GM12878 (cell line): ENCODE measurements at regions of chr6 and their contacts with region 1.

Region 1: DNA sequence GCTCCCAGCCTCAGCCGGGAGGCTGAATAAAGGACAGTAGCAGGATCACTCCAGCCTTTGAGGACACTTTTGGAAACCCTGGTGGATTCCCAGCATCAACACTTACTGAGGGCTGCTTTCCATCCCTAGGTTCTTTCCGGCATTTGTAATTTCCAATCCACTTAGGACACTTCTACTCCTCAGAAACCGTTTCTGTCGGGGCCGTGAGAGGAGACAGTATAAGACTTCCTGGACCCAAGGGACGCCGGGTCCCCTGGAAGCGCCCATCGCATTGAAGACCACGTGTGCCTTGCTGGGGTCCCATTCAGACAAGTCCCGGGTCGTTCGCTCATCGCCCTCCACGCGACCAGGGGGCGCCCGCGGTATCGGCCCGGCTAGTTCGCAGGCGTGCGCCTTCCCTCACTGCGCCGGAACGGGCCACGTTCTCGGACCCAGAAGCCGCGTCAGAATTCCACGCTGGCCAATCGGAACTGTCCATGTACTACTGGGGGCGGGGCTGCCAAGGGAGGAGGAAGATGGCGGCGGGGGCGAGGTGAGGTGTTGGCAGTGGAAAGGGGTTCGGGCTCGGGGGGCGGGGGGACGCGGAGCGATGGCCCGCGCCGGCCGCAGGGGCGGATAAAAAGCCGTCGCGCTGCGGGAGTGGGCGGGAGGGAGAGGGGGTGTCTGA is at the start of gene NUS1:
- DNase-seq: peak; percentile 88
- ATAC-seq: peak; percentile 94
- H3K4me3 ChIP-seq: peak within 1 kb of the TSS; percentile 86
- H3K27ac ChIP-seq: peak within 1 kb of the TSS; percentile 82
- H3K4me1 ChIP-seq: no peaks in the 10 kb centered on the region
- H3K27me3 ChIP-seq: no peaks in the 10 kb centered on the region
- CTCF ChIP-seq: peak; percentile 81 to 93 (median 81); a peak in 5 of 6 replicates
- EP300 ChIP-seq: no peak
- POLR2A ChIP-seq: peak; percentile 56
- RAD21 ChIP-seq: no peak
- polyA plus RNA-seq, gene NUS1: 16.7 to 22.0 TPM

Region 2: DNA sequence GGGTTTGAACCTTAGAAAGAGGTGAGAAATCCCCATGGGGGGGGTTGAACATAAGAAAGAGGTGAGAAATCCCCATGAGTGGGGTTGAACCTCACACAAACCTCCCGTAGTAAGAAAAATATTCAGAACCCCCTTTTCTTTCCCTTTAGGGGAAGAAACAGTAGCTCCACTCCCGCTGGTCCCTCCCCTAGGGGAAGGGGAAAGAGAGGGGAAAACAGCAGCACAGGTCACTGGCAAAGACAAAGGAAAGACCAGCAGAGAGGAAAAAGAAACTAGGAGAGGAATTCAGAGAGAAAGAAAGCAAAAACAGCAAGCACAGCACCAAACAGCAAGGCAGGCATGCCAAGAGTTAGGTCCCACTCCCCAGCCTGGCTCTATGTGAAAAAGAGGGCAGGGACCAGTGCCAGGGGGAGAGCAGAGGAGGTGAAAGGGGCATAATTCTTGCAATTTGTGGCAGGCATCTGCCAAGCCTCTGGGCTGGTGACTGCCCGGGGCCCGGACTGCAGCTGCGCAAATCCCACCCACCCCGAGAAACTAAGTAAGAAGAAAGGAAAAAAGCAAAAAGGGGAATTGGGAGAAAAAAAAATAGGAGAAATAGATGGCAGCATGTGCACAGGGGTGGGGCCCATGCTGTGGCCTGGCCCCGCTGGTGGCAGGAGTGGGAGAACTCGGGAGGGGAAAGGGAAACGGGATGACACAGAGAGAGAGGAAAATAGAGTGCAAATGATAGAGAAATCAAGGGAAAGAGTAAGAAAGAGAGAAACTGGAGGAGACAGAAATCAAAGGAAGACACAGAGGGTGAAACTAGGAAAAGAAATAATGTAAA is 57.7 kb before region 1 on chr6:
- CTCF ChIA-PET with region 1: no interaction called
- POLR2A ChIA-PET with region 1: no interaction called
- RAD21 ChIA-PET with region 1: no interaction called
- SMC1A ChIA-PET with region 1: no interaction called
- in situ Hi-C with region 1: no loop called
- intact Hi-C with region 1: loop called (anchors 1 kb)
- DNase-seq: no peak
- ATAC-seq: peak; percentile 47
- H3K4me3 ChIP-seq: no peak overlapping the region
- H3K27ac ChIP-seq: peak overlapping the region; percentile 66
- H3K4me1 ChIP-seq: 0 out of 2 replicates have a peak, but pooled peaks cover 3% of the 10 kb centered on the region
- H3K27me3 ChIP-seq: no peaks in the 10 kb centered on the region
- CTCF ChIP-seq: no peak
- EP300 ChIP-seq: no peak
- POLR2A ChIP-seq: no peak
- RAD21 ChIP-seq: no peak

Region 3: GRCh38 chr6:117771403-117771802 is 96.3 kb after region 1 on chr6:
- CTCF ChIA-PET with region 1: no interaction called
- POLR2A ChIA-PET with region 1: no interaction called
- RAD21 ChIA-PET with region 1: interaction called, 3 read pairs
- SMC1A ChIA-PET with region 1: no interaction called
- in situ Hi-C with region 1: no loop called
- intact Hi-C with region 1: loop called (anchors 5 kb)
- DNase-seq: peak; percentile 90
- ATAC-seq: peak; percentile 98
- H3K4me3 ChIP-seq: no peak overlapping the region
- H3K27ac ChIP-seq: peak overlapping the region; percentile 55; the same call in 1 of the 2 replicates
- H3K4me1 ChIP-seq: peaks cover 30% of the 10 kb centered on the region
- H3K27me3 ChIP-seq: no peaks in the 10 kb centered on the region
- CTCF ChIP-seq: no peak
- EP300 ChIP-seq: peak; percentile 64 to 83; a peak in 2 of 4 replicates
- POLR2A ChIP-seq: no peak
- RAD21 ChIP-seq: no peak

Region 4: DNA sequence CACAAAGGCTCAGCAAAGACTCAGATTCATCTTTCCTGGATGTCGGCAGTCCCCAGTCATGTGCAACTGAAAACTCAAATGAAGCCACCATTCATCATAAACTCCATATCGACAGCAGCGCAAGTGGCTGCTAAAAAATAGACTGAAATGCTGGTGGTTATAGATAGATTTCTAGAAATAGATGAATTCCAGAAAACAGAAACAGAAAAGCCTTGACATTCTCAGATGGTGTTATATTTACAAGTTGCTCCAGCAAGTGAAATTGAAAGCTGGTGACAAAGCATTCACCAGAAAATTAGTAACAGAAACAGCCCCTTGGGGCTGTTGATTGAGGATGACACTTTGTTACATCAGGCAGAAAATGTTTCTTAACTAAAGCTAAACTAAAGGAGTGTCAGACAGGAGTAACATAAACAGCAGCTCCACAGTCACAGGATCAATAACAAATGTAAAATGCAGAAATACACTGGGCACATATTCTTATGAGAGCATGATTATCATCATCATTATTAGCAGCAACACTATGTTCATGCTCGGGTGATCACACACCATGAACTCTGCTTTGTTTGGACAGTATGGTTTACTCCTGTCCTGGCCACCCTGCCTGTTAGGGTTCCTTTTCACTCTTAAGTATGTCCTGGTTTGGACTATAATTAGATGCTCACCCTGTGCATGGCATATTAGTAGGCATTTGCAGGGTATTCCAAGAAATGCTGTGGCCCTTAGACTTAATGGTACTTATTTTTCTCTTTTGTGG is 195.5 kb after region 1 on chr6:
- CTCF ChIA-PET with region 1: no interaction called
- POLR2A ChIA-PET with region 1: no interaction called
- RAD21 ChIA-PET with region 1: no interaction called
- SMC1A ChIA-PET with region 1: no interaction called
- in situ Hi-C with region 1: no loop called
- intact Hi-C with region 1: no loop called
- DNase-seq: no peak
- ATAC-seq: peak; percentile 57
- H3K4me3 ChIP-seq: no peak overlapping the region
- H3K27ac ChIP-seq: no peak overlapping the region
- H3K4me1 ChIP-seq: no peaks in the 10 kb centered on the region
- H3K27me3 ChIP-seq: no peaks in the 10 kb centered on the region
- CTCF ChIP-seq: no peak
- EP300 ChIP-seq: no peak
- POLR2A ChIP-seq: no peak
- RAD21 ChIP-seq: no peak